Pancreas (tissue), 10 donors: ENCODE measurements at regions of chr1 and their contacts with region 1.

Region 1: GRCh38 chr1:8727809-8728213 is 89.6 kb downstream of the RERE start:
- DNase-seq: no peak
- ATAC-seq: peak in 3 of 4 donors; percentile 33 to 75 (median 64)
- H3K4me3 ChIP-seq: no peak overlapping the region
- H3K27ac ChIP-seq: no peak overlapping the region
- H3K4me1 ChIP-seq: peaks cover 5 to 6% (median 6%) of the 10 kb centered on the region in 3 donors
- H3K27me3 ChIP-seq: no peaks in the 10 kb centered on the region
- CTCF ChIP-seq: no peak

Region 2: GRCh38 chr1:8554956-8555534 is 172.8 kb before region 1 on chr1:
- intact Hi-C with region 1: loop called in 2 of 3 experiments (anchors 5 to 10 kb)
- DNase-seq: peak in 3 of 6 donors; percentile 22 to 52 (median 36)
- ATAC-seq: peak in 3 of 4 donors; percentile 39 to 40 (median 40)
- H3K4me3 ChIP-seq: no peak overlapping the region
- H3K27ac ChIP-seq: peak overlapping the region in 1 of 4 donors; percentile 6
- H3K4me1 ChIP-seq: peaks cover 5 to 24% (median 24%) of the 10 kb centered on the region in 3 donors
- H3K27me3 ChIP-seq: no peaks in the 10 kb centered on the region
- CTCF ChIP-seq: no peak

Region 3: DNA sequence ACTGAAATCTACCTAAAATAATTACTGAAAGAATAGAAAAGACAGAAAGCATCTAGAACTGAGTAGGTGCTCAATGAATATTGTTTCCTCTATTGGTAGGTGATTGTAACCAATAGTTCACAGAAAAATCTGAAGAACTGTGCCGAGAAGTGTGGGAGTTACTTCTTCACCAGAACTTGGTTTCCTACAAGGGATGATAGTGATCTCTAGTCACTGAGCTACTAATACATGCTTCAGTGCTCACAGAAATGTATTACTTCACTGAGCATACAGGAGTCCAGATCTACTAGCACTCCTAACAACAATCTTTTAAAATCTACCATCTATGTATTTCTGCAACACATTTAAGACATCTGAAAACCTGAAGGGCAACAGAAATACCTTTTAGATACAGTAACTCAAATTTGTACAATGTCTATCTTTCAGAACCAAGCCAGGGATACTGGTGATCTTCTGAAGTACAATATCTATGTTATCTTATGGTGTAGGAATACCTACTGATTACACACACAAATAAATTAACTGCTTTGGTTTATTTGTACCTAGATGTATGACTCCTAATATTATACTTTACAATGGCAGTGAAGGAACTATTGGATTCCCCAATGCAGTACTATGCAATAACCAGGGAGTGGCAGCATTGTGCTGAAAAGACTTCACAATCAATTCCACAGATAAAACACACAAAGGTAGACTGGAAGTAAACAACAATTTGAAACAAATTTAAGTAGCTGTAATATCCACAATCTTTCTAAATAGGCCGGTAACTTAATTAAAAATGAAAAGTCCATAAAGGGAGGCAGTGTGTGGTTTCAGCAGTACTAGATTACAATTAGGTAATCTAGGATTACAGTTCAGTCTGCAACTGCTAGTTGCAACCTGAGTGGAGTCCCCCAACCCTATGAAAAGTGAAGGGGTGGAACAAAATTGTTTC is 166.9 kb before region 1 on chr1:
- intact Hi-C with region 1: loop called in 2 of 3 experiments (anchors 5 to 10 kb)
- DNase-seq: peak in 1 of 6 donors; percentile 15
- ATAC-seq: peak; percentile 79 to 91 (median 89)
- H3K4me3 ChIP-seq: no peak overlapping the region
- H3K27ac ChIP-seq: no peak overlapping the region
- H3K4me1 ChIP-seq: peaks cover 11 to 22% (median 18%) of the 10 kb centered on the region in 3 donors
- H3K27me3 ChIP-seq: no peaks in the 10 kb centered on the region
- CTCF ChIP-seq: peak; percentile 46 to 91 (median 80)